Right ventricle myocardium inferior (tissue), 1 donor: ENCODE measurements at regions of chr11 and their contacts with region 1.

Region 1: GRCh38 chr11:47946682-47947575 is 33.4 kb upstream of the PTPRJ start:
- DNase-seq: no peak
- ATAC-seq: peak; percentile 77

Region 2: DNA sequence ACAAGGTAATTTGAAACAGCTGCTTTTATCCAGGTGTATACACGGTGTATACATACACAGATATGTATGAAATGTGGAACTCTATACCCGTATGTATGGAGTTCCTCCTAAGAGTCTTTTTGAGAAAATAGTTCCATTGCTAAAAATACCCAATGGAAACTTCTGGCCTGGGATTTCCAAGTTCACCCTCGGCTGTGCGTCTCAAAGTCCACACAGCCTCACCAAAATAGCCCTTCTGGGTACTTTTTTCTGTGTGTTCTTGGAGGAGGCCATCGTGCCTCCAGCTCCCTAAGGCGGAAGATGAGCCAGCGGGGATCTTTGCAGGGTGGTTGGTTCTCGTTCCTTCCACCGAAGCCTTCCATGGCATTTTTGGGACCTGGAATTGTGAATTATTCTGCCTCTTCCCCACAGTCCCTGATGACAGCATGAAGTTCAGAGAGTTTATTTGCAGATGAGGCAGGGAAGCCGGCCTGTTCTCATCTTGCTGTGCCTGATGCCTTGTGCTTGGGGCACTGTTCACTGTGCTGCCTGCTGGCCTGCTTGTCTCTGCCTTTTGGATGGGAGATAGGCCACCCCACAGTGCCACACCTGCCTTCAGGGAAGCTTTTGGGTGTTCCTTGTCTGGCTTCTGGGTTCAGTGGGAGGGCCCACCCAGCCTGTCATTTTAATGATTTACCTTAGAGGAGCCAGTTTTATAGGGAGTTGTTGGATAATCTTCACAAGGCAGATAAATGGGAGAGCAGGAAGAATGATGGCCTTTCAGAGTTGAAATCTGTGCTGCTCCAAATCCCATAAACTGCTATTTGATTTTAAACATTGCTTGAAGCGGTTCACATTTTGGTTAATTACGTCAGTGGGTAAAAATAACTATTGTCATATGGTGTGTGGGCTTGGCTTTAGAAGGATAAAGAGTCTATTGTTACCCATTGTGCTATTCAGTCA is 157.0 kb after region 1 on chr11:
- intact Hi-C with region 1: loop called (anchors 5 kb)
- DNase-seq: no peak
- ATAC-seq: no peak